ENCODE measurements at regions of chr3 and their contacts with region 1.

Region 1: GRCh38 chr3:49093853-49094767 is at the start of gene QRICH1:
- DNase-seq: peak; percentile 97
- H3K4me3 Mint-ChIP-seq: peak within 1 kb of the TSS; percentile 84
- H3K27ac Mint-ChIP-seq: peak within 1 kb of the TSS; percentile 91
- H3K4me1 Mint-ChIP-seq: peaks cover 34% of the 10 kb centered on the region
- H3K27me3 Mint-ChIP-seq: no peaks in the 10 kb centered on the region
- total RNA-seq, gene QRICH1: 136 to 140 TPM

Region 2: GRCh38 chr3:48635222-48636021 is 458.7 kb before region 1 on chr3 and contains the start of gene SLC26A6:
- CTCF ChIA-PET with region 1: no interaction called
- POLR2A ChIA-PET with region 1: interaction called, 11 read pairs
- DNase-seq: peak; percentile 96
- H3K4me3 Mint-ChIP-seq: peak within 1 kb of the TSS; percentile 91
- H3K27ac Mint-ChIP-seq: peak within 1 kb of the TSS; percentile 87
- H3K4me1 Mint-ChIP-seq: peaks cover 31% of the 10 kb centered on the region
- H3K27me3 Mint-ChIP-seq: no peaks in the 10 kb centered on the region
- total RNA-seq, gene SLC26A6: 55.4 to 56.0 TPM

Region 3: DNA sequence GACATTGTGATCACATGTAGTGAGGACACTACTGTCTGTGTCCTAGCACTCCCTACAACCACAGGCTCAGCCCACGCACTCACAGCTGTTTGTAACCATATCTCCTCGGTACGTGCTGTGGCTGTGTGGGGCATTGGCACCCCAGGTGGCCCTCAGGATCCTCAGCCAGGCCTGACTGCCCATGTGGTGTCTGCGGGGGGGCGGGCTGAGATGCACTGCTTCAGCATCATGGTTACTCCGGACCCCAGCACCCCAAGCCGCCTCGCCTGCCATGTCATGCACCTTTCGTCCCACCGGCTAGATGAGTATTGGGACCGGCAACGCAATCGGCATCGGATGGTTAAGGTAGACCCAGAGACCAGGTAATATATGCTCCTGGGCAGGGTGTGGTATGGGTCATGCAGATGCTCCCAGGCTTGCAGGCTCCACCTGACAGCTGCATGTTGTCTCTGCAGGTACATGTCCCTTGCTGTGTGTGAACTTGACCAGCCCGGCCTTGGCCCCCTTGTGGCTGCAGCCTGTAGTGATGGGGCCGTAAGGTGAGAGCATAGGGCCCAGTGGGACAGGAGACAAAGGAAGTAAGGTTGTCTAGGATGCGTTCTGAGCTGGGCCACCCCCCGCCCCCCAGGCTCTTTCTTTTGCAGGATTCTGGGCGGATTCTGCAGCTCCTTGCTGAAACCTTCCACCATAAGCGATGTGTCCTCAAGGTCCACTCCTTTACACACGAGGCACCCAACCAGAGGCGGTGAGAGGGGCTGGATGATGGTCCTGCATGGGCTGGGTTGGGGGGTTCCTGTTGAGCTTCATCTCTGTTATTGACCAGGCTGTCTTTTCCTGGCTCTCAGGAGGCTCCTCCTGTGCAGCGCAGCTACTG is 80.1 kb before region 1 on chr3:
- CTCF ChIA-PET with region 1: interaction called, 15 read pairs
- POLR2A ChIA-PET with region 1: interaction called, 99 read pairs
- DNase-seq: peak; percentile 59
- H3K4me3 Mint-ChIP-seq: no peak overlapping the region
- H3K27ac Mint-ChIP-seq: no peak overlapping the region
- H3K4me1 Mint-ChIP-seq: peaks cover 37% of the 10 kb centered on the region
- H3K27me3 Mint-ChIP-seq: no peaks in the 10 kb centered on the region

Region 4: GRCh38 chr3:49081429-49081828 is 12.7 kb before region 1 on chr3:
- CTCF ChIA-PET with region 1: interaction called, 5 read pairs
- POLR2A ChIA-PET with region 1: interaction called, 51 read pairs
- DNase-seq: no peak
- H3K4me3 Mint-ChIP-seq: no peak overlapping the region
- H3K27ac Mint-ChIP-seq: no peak overlapping the region
- H3K4me1 Mint-ChIP-seq: no peaks in the 10 kb centered on the region
- H3K27me3 Mint-ChIP-seq: no peaks in the 10 kb centered on the region

Region 5: DNA sequence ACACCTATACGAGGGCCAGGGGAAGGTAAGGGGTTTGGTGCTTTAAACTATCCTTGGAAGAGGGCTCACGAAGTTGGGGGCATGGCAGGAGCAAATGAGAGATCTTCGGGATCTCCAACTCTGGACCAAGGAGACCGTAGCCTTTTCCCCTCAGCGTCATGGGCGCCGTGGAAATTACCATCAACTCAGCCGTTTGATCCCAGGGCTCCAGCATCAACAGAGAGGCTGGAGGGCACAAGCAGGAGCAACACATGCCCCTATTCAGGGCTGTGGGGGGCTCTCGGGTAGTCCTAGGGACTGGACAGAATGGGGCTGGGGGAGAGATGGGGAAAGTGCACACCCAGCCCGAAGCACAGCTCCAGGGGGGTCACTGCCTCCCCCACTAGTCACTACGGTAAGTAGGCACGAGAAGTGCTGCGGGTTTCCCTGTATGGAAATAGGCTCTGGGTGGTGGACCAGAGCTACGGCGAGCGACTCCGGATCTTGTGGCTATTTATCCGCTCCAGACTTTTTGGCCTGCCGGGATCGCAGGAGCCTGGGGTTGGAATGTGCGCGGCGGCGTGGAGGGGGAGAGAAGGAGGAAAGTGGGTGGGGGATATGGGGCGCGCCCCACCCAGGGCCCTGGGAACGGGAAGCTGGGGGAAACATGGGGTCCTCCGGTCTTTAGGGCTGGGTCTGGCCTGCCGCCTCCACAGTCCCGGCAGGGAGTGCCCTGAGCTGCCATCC is 39.3 kb after region 1 on chr3:
- CTCF ChIA-PET with region 1: no interaction called
- POLR2A ChIA-PET with region 1: interaction called, 10 read pairs
- DNase-seq: no peak
- H3K4me3 Mint-ChIP-seq: no peak overlapping the region
- H3K27ac Mint-ChIP-seq: no peak overlapping the region
- H3K4me1 Mint-ChIP-seq: no peaks in the 10 kb centered on the region
- H3K27me3 Mint-ChIP-seq: peaks cover 8% of the 10 kb centered on the region

Region 6: GRCh38 chr3:49255112-49255511 is 161.0 kb after region 1 on chr3:
- CTCF ChIA-PET with region 1: no interaction called
- POLR2A ChIA-PET with region 1: no interaction called
- DNase-seq: no peak
- H3K4me3 Mint-ChIP-seq: no peak overlapping the region
- H3K27ac Mint-ChIP-seq: no peak overlapping the region
- H3K4me1 Mint-ChIP-seq: no peaks in the 10 kb centered on the region
- H3K27me3 Mint-ChIP-seq: peaks cover 2% of the 10 kb centered on the region

Region 7: DNA sequence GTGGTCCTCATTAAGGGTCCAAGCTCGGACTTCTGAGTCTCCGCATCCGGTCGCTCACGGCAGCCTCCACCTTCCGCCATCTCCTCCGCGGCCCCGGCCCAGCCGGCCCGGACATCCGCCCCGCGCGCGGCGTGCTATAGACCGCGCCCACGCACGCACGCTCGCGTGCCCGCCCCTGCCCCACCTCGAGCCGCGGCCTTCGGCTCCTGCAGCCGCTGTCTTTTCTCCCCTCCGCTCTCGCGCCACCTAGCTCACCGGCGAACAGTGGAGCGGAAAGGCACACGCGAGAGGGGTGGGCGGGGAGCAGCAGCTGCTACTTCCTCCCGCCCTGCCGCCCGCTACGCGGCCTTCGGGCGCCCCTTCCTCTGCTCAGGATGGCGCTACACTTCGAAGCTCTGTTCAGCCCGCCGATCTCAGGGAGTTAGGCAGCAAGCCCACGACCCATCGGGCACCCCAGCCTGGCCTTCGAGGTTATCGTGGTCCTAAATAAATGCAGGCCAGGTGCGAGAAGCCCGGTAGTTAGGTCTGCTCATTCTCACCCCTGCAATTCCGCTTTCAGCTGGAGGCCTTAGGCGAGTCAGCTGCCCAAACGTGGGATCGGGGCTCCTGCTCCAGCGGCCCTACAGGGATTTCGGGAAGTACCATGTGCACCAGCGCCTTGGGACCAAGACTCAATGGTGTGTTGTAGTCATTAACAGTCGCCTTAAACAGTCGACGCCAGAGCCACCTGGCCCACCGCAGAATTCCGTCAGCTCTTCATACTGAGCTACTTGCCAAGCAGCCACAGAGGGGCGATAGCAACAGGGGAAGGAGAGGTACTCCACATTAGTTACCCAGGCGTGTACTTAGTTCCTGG is 246.1 kb after region 1 on chr3 and contains the start of gene USP4:
- CTCF ChIA-PET with region 1: interaction called, 4 read pairs
- POLR2A ChIA-PET with region 1: interaction called, 19 read pairs
- DNase-seq: peak; percentile 95
- H3K4me3 Mint-ChIP-seq: peak within 1 kb of the TSS; percentile 95
- H3K27ac Mint-ChIP-seq: peak within 1 kb of the TSS; percentile 98
- H3K4me1 Mint-ChIP-seq: peaks cover 42% of the 10 kb centered on the region
- H3K27me3 Mint-ChIP-seq: no peaks in the 10 kb centered on the region
- total RNA-seq, gene USP4: 77.8 to 85.0 TPM

Measured in activated CD4-positive, alpha-beta memory T cell treated with anti-CD3 and anti-CD28 coated beads, Interleukin-2, amount 10 ng/mL, durations not matched to agents 7 days and 5 days (primary cell).